RWPE1 (cell line): ENCODE measurements at regions of chr14 and their contacts with region 1.

Region 1: DNA sequence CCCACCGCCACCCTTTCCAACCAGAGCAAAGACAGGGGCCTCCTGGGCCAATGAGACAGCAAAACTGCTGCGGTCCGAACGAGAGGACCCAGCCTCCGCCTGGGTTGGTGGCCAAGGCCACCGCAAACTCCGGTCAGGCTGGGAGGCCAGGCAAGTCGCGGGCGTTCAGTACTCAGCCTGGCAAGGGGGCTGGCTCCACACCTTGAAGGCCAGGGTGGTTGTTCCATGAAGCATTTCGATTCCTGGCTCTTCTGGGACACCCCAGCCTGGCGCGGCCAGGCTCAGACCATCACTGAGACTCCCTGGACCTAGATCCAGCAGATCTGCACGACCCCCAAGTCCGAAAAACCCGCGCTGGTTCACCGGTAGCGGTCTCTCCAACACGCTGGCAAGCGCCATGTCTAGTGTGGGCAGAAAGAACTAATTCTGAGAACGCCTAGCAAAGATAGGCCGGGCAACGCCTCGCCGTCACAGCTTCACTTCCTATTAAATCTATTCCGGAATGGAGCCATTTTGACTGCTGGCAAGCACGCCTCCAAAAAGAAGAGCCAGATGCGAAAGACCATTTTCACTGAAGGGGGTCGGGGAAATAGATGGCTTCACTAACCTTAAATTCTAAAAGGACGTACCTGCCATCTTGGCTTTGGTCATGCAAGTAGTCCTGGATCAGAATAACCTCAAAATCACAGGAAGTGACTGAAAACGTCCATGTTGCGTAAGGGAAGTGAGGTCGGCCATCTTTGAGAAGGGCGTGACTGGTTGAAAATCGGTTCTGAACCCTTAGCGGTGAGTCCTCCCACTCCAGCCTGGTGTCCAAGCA is at the start of gene PSMB5:
- DNase-seq: peak; percentile 95
- H3K27ac ChIP-seq: peak within 1 kb of the TSS; percentile 83
- CTCF ChIP-seq: no peak

Region 2: GRCh38 chr14:23294734-23295561 is 260.3 kb after region 1 on chr14:
- CTCF ChIA-PET with region 1: interaction called, 10 read pairs
- POLR2A ChIA-PET with region 1: no interaction called
- DNase-seq: no peak
- H3K27ac ChIP-seq: no peak overlapping the region
- CTCF ChIP-seq: peak; percentile 88